ENCODE measurements at regions of chr15 and their contacts with region 1.

Region 1: GRCh38 chr15:44956388-44956787 is at the start of gene TERB2:
- DNase-seq: no peak
- ATAC-seq: no peak
- H3K4me3 ChIP-seq: no peak within 1 kb of the TSS
- H3K27ac ChIP-seq: no peak within 1 kb of the TSS
- H3K4me1 ChIP-seq: no peaks in the 10 kb centered on the region
- H3K27me3 ChIP-seq: no peaks in the 10 kb centered on the region
- CTCF ChIP-seq: no peak
- total RNA-seq, gene TERB2: not detected

Region 2: DNA sequence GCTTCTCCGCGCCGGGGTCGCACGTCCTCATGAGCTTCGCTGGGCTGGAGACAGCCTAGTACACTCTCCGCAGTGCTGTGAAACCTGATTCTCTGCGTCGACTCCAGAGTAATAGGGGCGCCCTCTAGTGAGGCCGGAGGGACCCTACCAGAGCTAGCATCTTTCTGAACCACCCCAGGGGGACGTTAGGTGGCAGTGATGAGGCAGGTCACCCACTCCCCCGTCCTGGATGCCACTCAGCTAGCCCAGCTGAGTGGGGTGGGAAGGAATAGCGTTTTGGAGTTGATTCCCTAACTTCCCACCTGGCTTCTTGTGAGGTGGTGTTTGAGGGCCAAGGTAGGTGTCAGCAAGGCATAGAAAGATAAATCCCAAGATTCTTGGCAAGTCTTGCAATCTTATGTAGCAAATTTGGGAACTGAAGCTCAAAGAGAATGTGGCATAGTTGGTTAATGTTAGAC is 161.8 kb after region 1 on chr15:
- intact Hi-C with region 1: loop called in 1 of 3 experiments (anchors 10 kb)
- DNase-seq: peak; percentile 84 to 91 (median 87)
- ATAC-seq: peak; percentile 96 to 98 (median 96)
- H3K4me3 ChIP-seq: no peak overlapping the region
- H3K27ac ChIP-seq: no peak overlapping the region
- H3K4me1 ChIP-seq: peaks cover 0 to 4% (median 0%) of the 10 kb centered on the region in 3 donors
- H3K27me3 ChIP-seq: peaks cover 0 to 11% (median 4%) of the 10 kb centered on the region in 4 donors
- CTCF ChIP-seq: peak; percentile 92 to 98 (median 97)

Region 3: DNA sequence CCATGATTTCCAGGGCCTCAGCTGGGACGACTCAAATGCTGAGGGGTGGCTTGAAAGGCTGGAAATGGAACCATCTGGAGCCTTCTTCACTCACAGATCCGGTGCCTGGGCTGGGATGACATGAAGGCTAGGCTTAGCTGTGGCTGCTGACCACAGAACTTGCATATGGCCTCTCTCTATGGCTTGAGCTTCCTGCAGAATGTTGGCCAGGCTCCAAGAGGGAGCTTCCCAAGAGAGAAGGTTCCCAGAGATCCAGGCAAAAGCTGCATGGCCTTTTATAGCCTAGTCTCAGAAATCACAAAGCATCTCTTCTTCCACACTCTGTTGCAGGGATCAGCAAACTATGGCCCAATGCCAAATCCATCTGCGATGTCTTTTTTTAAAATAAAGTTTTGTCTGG is 377.2 kb after region 1 on chr15:
- intact Hi-C with region 1: no loop called
- DNase-seq: peak in 3 of 6 donors; percentile 42 to 55 (median 43)
- ATAC-seq: peak in 3 of 4 donors; percentile 25 to 50 (median 50)
- H3K4me3 ChIP-seq: no peak overlapping the region
- H3K27ac ChIP-seq: peak overlapping the region in 3 of 4 donors; percentile 18 to 74 (median 67)
- H3K4me1 ChIP-seq: peaks cover 12 to 65% (median 40%) of the 10 kb centered on the region in 3 donors
- H3K27me3 ChIP-seq: no peaks in the 10 kb centered on the region
- CTCF ChIP-seq: no peak